B cell (primary cell): ENCODE measurements at regions of chr10 and their contacts with region 1.

Region 1: GRCh38 chr10:11165591-11166543 is 148.2 kb downstream of the CELF2 start:
- DNase-seq: peak; percentile 84
- ATAC-seq: peak; percentile 48
- H3K4me3 ChIP-seq: peak overlapping the region; percentile 71 to 99 (median 94)
- H3K4me3 Mint-ChIP-seq: no peak overlapping the region
- H3K27ac ChIP-seq: peak overlapping the region; percentile 84 to 87
- H3K27ac Mint-ChIP-seq: peak overlapping the region; percentile 98
- H3K4me1 ChIP-seq: peaks cover 65 to 69% of the 10 kb centered on the region in 2 donors
- H3K4me1 Mint-ChIP-seq: peaks cover 45% of the 10 kb centered on the region
- H3K27me3 ChIP-seq: no peaks in the 10 kb centered on the region
- H3K27me3 Mint-ChIP-seq: no peaks in the 10 kb centered on the region
- CTCF ChIP-seq: peak; percentile 79

Region 2: GRCh38 chr10:10869592-10869991 is 296.3 kb before region 1 on chr10:
- CTCF ChIA-PET with region 1: no interaction called
- POLR2A ChIA-PET with region 1: no interaction called
- intact Hi-C with region 1: no loop called
- DNase-seq: no peak
- ATAC-seq: no peak
- H3K4me3 ChIP-seq: no peak overlapping the region
- H3K4me3 Mint-ChIP-seq: no peak overlapping the region
- H3K27ac ChIP-seq: no peak overlapping the region
- H3K27ac Mint-ChIP-seq: no peak overlapping the region
- H3K4me1 ChIP-seq: no peaks in the 10 kb centered on the region
- H3K4me1 Mint-ChIP-seq: peaks cover 8% of the 10 kb centered on the region
- H3K27me3 ChIP-seq: peaks cover 0 to 11% (median 2%) of the 10 kb centered on the region in 4 experiments
- H3K27me3 Mint-ChIP-seq: peaks cover 17% of the 10 kb centered on the region
- CTCF ChIP-seq: no peak

Region 3: DNA sequence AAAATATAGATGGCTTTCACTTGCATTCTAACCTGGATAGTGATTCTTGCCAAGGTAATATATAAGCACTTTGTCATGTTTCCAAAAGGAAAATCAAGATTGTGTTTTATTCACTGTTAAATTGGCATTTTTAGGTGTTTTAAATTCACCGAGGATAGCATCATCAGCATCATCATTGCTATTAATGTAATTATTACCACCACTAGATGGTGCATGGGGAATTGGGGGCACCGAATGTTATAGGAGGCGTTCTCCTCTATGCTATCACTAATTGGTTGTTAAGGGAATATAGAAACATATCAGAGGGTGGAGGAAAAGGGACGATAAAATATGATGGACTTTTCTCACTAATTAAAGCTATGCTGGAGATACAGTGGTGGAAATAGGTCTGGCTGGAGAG is 52.7 kb before region 1 on chr10:
- CTCF ChIA-PET with region 1: interaction called, 57 read pairs
- POLR2A ChIA-PET with region 1: interaction called, 4 read pairs
- intact Hi-C with region 1: loop called (anchors 2 kb)
- DNase-seq: peak; percentile 71
- ATAC-seq: peak; percentile 70
- H3K4me3 ChIP-seq: no peak overlapping the region
- H3K4me3 Mint-ChIP-seq: peak overlapping the region; percentile 17
- H3K27ac ChIP-seq: no peak overlapping the region
- H3K27ac Mint-ChIP-seq: no peak overlapping the region
- H3K4me1 ChIP-seq: peaks cover 7 to 9% of the 10 kb centered on the region in 2 donors
- H3K4me1 Mint-ChIP-seq: peaks cover 7% of the 10 kb centered on the region
- H3K27me3 ChIP-seq: no peaks in the 10 kb centered on the region
- H3K27me3 Mint-ChIP-seq: no peaks in the 10 kb centered on the region
- CTCF ChIP-seq: peak; percentile 67

Region 4: GRCh38 chr10:11154333-11154732 is 11.5 kb before region 1 on chr10:
- CTCF ChIA-PET with region 1: interaction called, 139 read pairs
- POLR2A ChIA-PET with region 1: interaction called, 9 read pairs
- intact Hi-C with region 1: loop called (anchors 1 kb)
- DNase-seq: peak; percentile 42
- ATAC-seq: peak; percentile 54
- H3K4me3 ChIP-seq: no peak overlapping the region
- H3K4me3 Mint-ChIP-seq: peak overlapping the region; percentile 52
- H3K27ac ChIP-seq: no peak overlapping the region
- H3K27ac Mint-ChIP-seq: peak overlapping the region; percentile 16
- H3K4me1 ChIP-seq: peaks cover 69 to 71% of the 10 kb centered on the region in 2 donors
- H3K4me1 Mint-ChIP-seq: peaks cover 85% of the 10 kb centered on the region
- H3K27me3 ChIP-seq: no peaks in the 10 kb centered on the region
- H3K27me3 Mint-ChIP-seq: no peaks in the 10 kb centered on the region
- CTCF ChIP-seq: no peak

Region 5: GRCh38 chr10:11197266-11197712 is 31.4 kb after region 1 on chr10:
- CTCF ChIA-PET with region 1: interaction called, 5 read pairs
- POLR2A ChIA-PET with region 1: no interaction called
- intact Hi-C with region 1: loop called (anchors 1 kb)
- DNase-seq: peak; percentile 73
- ATAC-seq: peak; percentile 78
- H3K4me3 ChIP-seq: peak overlapping the region in 1 of 5 experiments; percentile 8
- H3K4me3 Mint-ChIP-seq: peak overlapping the region; percentile 80
- H3K27ac ChIP-seq: peak overlapping the region; percentile 41 to 48
- H3K27ac Mint-ChIP-seq: peak overlapping the region; percentile 88
- H3K4me1 ChIP-seq: peaks cover 53 to 59% of the 10 kb centered on the region in 2 donors
- H3K4me1 Mint-ChIP-seq: peaks cover 91% of the 10 kb centered on the region
- H3K27me3 ChIP-seq: no peaks in the 10 kb centered on the region
- H3K27me3 Mint-ChIP-seq: no peaks in the 10 kb centered on the region
- CTCF ChIP-seq: no peak

Region 6: DNA sequence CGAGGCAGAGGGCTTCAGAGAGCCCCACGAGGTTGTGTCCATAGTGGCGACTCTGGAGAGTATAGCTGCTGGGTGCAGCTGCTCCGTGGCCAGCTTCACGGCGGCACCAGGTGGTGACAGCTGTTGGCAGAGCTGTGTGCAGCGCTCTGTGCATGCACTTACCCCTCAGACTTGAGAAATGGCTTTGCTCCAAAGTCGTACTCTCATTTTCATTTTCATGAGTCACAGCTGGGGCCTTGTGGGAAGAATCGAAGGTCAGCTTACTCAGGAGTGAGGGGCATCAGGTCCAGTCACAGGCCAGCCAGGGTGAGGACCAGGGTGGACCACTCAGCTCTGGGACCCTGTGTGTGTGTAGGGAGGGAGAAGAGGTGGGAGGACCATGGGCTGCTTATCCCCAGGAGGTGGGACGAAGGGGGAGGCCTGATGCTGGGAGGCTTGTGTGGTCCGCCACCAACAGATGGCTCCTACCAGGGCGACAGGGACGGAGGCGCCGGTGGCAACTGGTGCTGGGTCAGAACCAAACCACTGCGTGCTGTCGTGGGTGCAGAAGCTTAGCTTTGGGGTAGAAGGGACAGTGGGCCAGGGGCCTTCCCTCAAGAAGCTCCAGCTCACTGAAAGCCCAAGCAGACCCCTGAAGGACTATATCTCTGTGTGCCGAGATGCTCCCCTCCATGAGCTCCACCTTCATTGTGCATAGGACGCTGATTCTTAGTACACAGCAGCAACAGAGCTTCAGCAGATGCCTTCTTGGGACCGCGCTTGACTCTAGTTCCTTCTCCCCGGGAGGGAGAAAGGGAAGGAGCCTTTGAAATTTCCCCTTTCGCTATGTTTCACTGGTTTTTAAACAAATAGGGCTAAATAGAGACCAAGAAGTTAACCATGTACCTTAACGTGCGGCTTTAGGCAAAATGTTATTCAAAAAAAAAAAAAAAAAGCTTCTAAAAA is 76.8 kb after region 1 on chr10:
- CTCF ChIA-PET with region 1: interaction called, 18 read pairs
- POLR2A ChIA-PET with region 1: interaction called, 37 read pairs
- intact Hi-C with region 1: loop called (anchors 1 kb)
- DNase-seq: peak; percentile 75
- ATAC-seq: peak; percentile 61
- H3K4me3 ChIP-seq: peak overlapping the region in 4 of 5 experiments; percentile 28 to 58 (median 40)
- H3K4me3 Mint-ChIP-seq: peak overlapping the region; percentile 91
- H3K27ac ChIP-seq: peak overlapping the region; percentile 66 to 80
- H3K27ac Mint-ChIP-seq: peak overlapping the region; percentile 97
- H3K4me1 ChIP-seq: peaks cover 82 to 85% of the 10 kb centered on the region in 2 donors
- H3K4me1 Mint-ChIP-seq: peaks cover 52% of the 10 kb centered on the region
- H3K27me3 ChIP-seq: no peaks in the 10 kb centered on the region
- H3K27me3 Mint-ChIP-seq: no peaks in the 10 kb centered on the region
- CTCF ChIP-seq: no peak

Region 7: GRCh38 chr10:11684717-11685645 is 519.1 kb after region 1 on chr10:
- CTCF ChIA-PET with region 1: no interaction called
- POLR2A ChIA-PET with region 1: no interaction called
- intact Hi-C with region 1: loop called (anchors 5 kb)
- DNase-seq: peak; percentile 91
- ATAC-seq: peak; percentile 74
- H3K4me3 ChIP-seq: peak overlapping the region; percentile 39 to 63 (median 58)
- H3K4me3 Mint-ChIP-seq: peak overlapping the region; percentile 93
- H3K27ac ChIP-seq: peak overlapping the region; percentile 96 to 98
- H3K27ac Mint-ChIP-seq: peak overlapping the region; percentile 99
- H3K4me1 ChIP-seq: peaks cover 81 to 90% of the 10 kb centered on the region in 2 donors
- H3K4me1 Mint-ChIP-seq: peaks cover 90% of the 10 kb centered on the region
- H3K27me3 ChIP-seq: no peaks in the 10 kb centered on the region
- H3K27me3 Mint-ChIP-seq: no peaks in the 10 kb centered on the region
- CTCF ChIP-seq: no peak

Region 8: GRCh38 chr10:11934262-11934661 is 768.4 kb after region 1 on chr10:
- CTCF ChIA-PET with region 1: no interaction called
- POLR2A ChIA-PET with region 1: no interaction called
- intact Hi-C with region 1: no loop called
- DNase-seq: no peak
- ATAC-seq: no peak
- H3K4me3 ChIP-seq: no peak overlapping the region
- H3K4me3 Mint-ChIP-seq: no peak overlapping the region
- H3K27ac ChIP-seq: peak overlapping the region in 1 of 2 donors; percentile 11
- H3K27ac Mint-ChIP-seq: no peak overlapping the region
- H3K4me1 ChIP-seq: no peaks in the 10 kb centered on the region
- H3K4me1 Mint-ChIP-seq: no peaks in the 10 kb centered on the region
- H3K27me3 ChIP-seq: no peaks in the 10 kb centered on the region
- H3K27me3 Mint-ChIP-seq: no peaks in the 10 kb centered on the region
- CTCF ChIP-seq: no peak